ENCODE measurements at regions of chr3 and their contacts with region 1.

Region 1: DNA sequence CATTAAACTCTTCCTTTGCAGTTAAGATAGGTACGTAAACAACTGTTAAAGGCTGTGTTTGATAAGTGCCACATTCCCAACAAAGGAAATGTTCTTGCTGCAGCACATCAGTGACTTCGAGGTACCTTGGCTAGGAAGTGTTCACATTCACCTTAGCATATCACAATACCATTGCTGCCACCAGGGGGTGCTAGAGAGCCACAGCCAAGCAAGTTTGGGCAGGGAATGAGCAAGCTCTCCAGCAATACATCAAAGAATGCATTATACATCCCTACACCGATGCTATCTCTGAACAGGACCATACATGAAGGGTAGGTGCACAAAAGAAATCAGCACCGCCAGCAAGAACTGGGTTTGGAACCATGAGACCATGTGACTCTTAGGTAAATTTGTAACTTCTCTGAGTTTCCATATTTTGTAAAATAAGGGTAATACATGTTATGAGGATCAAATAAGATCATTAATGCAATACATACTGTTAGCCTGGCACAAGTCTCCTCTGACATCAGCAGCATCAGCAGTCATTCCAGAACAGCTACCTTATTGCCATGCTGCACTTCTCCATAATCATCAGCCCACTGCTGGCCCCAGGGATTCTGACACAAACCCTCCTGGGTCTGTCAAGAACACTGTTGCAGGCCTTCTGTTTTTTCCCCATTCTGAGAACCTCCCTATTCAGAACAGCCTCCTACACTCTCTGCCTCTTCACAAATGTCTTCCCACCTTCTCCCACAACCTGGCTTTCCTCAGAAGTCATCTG is 37.6 kb downstream of the RYK start:
- DNase-seq: peak; percentile 81
- ATAC-seq: peak; percentile 95
- H3K4me3 ChIP-seq: no peak overlapping the region
- H3K27ac ChIP-seq: no peak overlapping the region
- H3K4me1 ChIP-seq: peaks cover 4% of the 10 kb centered on the region
- H3K27me3 ChIP-seq: no peaks in the 10 kb centered on the region
- CTCF ChIP-seq: peak; percentile 98

Region 2: DNA sequence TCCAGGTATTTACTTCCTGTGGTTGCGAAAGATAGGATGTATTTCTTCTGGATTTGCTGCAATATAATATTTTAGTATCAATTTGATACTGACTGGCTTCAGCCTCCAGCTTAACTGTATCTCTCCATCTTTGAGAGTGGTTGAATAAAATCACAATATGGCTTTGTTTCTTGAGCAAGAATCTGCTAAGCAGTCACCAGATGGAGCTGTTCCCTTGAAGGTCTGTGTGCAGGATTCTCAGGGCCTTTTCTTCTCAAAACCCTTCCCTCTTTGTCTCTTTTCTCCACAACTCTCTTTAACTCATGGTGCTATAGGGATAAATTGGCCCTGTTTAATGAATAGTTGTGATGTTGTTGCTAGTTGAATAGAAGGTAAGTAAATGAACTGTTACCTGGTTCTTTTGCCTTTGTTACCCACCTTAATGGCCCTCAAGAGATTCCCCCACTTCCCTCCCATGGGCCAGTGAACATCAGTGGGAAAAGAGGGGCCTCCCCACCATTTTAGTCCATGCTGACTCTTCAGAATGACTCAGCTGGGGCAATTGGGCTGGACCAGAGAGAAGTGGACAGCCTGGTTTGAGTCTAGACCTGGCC is 282.6 kb before region 1 on chr3:
- intact Hi-C with region 1: loop called (anchors 10 kb)
- DNase-seq: no peak
- ATAC-seq: no peak
- H3K4me3 ChIP-seq: no peak overlapping the region
- H3K27ac ChIP-seq: no peak overlapping the region
- H3K4me1 ChIP-seq: peaks cover 11% of the 10 kb centered on the region
- H3K27me3 ChIP-seq: no peaks in the 10 kb centered on the region
- CTCF ChIP-seq: peak; percentile 51

Region 3: GRCh38 chr3:134087046-134087985 is 125.8 kb before region 1 on chr3:
- intact Hi-C with region 1: no loop called
- DNase-seq: no peak
- ATAC-seq: no peak
- H3K4me3 ChIP-seq: no peak overlapping the region
- H3K27ac ChIP-seq: no peak overlapping the region
- H3K4me1 ChIP-seq: no peaks in the 10 kb centered on the region
- H3K27me3 ChIP-seq: no peaks in the 10 kb centered on the region
- CTCF ChIP-seq: no peak

Region 4: GRCh38 chr3:134299185-134299887 is 86.2 kb after region 1 on chr3:
- intact Hi-C with region 1: loop called (anchors 10 kb)
- DNase-seq: no peak
- ATAC-seq: peak; percentile 50
- H3K4me3 ChIP-seq: no peak overlapping the region
- H3K27ac ChIP-seq: no peak overlapping the region
- H3K4me1 ChIP-seq: no peaks in the 10 kb centered on the region
- H3K27me3 ChIP-seq: no peaks in the 10 kb centered on the region
- CTCF ChIP-seq: peak; percentile 37